Mammary epithelial cell (primary cell): ENCODE measurements at regions of chr13 and their contacts with region 1.

Region 1: GRCh38 chr13:24348797-24349515 is 39.6 kb downstream of the C1QTNF9 start:
- DNase-seq: peak; percentile 60
- H3K4me3 ChIP-seq: no peak overlapping the region
- H3K27ac ChIP-seq: no peak overlapping the region
- H3K4me1 ChIP-seq: peaks cover 27% of the 10 kb centered on the region
- H3K27me3 ChIP-seq: no peaks in the 10 kb centered on the region
- CTCF ChIP-seq: no peak

Region 2: GRCh38 chr13:26221721-26222519 is 1873.0 kb after region 1 on chr13 and contains the start of gene RNF6:
- CTCF ChIA-PET with region 1: no interaction called
- dilution Hi-C with region 1: no loop called
- in situ Hi-C with region 1: no loop called
- intact Hi-C with region 1: loop called (anchors 5 kb)
- DNase-seq: peak; percentile 99
- H3K4me3 ChIP-seq: peak within 1 kb of the TSS; percentile 82 to 87 (median 86)
- H3K27ac ChIP-seq: peak within 1 kb of the TSS; percentile 79
- H3K4me1 ChIP-seq: peaks cover 17% of the 10 kb centered on the region
- H3K27me3 ChIP-seq: no peaks in the 10 kb centered on the region
- CTCF ChIP-seq: no peak
- total RNA-seq, gene RNF6: 57.8 to 63.5 TPM